ENCODE measurements at regions of chr3 and their contacts with region 1.

Region 1: GRCh38 chr3:51591231-51591630 is 52.7 kb downstream of the RAD54L2 start:
- DNase-seq: no peak
- H3K4me3 ChIP-seq: no peak overlapping the region
- H3K27ac ChIP-seq: no peak overlapping the region
- H3K4me1 ChIP-seq: no peaks in the 10 kb centered on the region
- H3K27me3 ChIP-seq: no peaks in the 10 kb centered on the region
- CTCF ChIP-seq: no peak

Region 2: GRCh38 chr3:51354731-51355615 is 236.3 kb before region 1 on chr3:
- CTCF ChIA-PET with region 1: no interaction called
- dilution Hi-C with region 1: no loop called
- in situ Hi-C with region 1: no loop called
- intact Hi-C with region 1: no loop called
- DNase-seq: no peak
- H3K4me3 ChIP-seq: no peak overlapping the region
- H3K27ac ChIP-seq: no peak overlapping the region
- H3K4me1 ChIP-seq: peaks cover 11% of the 10 kb centered on the region
- H3K27me3 ChIP-seq: no peaks in the 10 kb centered on the region
- CTCF ChIP-seq: no peak

Region 3: GRCh38 chr3:51530490-51530889 is 60.7 kb before region 1 on chr3:
- CTCF ChIA-PET with region 1: no interaction called
- dilution Hi-C with region 1: loop called (anchors 5 kb)
- in situ Hi-C with region 1: no loop called
- intact Hi-C with region 1: no loop called
- DNase-seq: no peak
- H3K4me3 ChIP-seq: no peak overlapping the region
- H3K27ac ChIP-seq: no peak overlapping the region
- H3K4me1 ChIP-seq: no peaks in the 10 kb centered on the region
- H3K27me3 ChIP-seq: no peaks in the 10 kb centered on the region
- CTCF ChIP-seq: no peak